Activated CD4-positive, alpha-beta memory T cell treated with anti-CD3 and anti-CD28 coated beads for 36 hours (primary cell): ENCODE measurements at regions of chr3 and their contacts with region 1.

Region 1: DNA sequence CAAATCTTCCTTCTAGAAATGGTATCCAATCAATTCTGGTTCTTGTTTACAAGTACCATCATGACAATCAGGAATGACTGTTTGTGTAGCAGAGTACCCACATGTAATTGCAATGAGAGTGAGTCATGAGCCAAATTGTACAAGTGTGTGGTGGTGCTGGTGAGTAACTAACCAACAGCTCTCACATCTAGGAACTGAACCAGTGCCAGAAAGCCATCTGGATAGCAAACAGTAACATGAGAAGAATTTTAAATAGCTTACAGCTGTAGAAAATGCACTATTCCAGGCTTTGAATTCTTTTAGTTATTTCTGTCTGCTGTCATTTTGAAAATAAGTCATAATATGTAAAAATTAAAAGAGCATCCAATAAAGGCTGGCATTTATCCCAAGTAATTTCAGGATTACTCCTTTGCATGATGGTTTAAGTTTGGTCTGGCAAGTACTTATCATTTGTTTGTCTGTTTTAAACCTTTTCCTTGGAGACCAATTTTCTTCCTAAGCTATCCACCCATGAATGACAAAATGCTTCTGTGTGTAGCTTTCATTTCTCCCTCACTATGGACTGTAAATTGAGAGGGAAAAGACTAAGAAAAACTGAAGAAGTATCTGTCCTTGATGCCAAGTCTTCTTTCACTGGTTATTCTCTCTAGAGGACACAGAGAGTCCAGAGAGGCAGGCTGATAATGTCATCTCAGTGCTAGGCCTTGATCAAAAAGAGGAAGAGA is 60.0 kb downstream of the PIK3CB start:
- DNase-seq: peak; percentile 58
- H3K4me3 Mint-ChIP-seq: no peak overlapping the region
- H3K27ac Mint-ChIP-seq: no peak overlapping the region
- H3K4me1 Mint-ChIP-seq: peaks cover 32% of the 10 kb centered on the region
- H3K27me3 Mint-ChIP-seq: no peaks in the 10 kb centered on the region

Region 2: GRCh38 chr3:138747225-138747624 is 27.5 kb before region 1 on chr3:
- CTCF ChIA-PET with region 1: no interaction called
- POLR2A ChIA-PET with region 1: no interaction called
- intact Hi-C with region 1: no loop called
- DNase-seq: no peak
- H3K4me3 Mint-ChIP-seq: no peak overlapping the region
- H3K27ac Mint-ChIP-seq: no peak overlapping the region
- H3K4me1 Mint-ChIP-seq: peaks cover 2% of the 10 kb centered on the region
- H3K27me3 Mint-ChIP-seq: no peaks in the 10 kb centered on the region

Region 3: GRCh38 chr3:138761002-138761401 is 13.7 kb before region 1 on chr3:
- CTCF ChIA-PET with region 1: interaction called, 4 read pairs
- POLR2A ChIA-PET with region 1: no interaction called
- intact Hi-C with region 1: loop called (anchors 1 kb)
- DNase-seq: no peak
- H3K4me3 Mint-ChIP-seq: no peak overlapping the region
- H3K27ac Mint-ChIP-seq: peak overlapping the region; percentile 88
- H3K4me1 Mint-ChIP-seq: peaks cover 35% of the 10 kb centered on the region
- H3K27me3 Mint-ChIP-seq: no peaks in the 10 kb centered on the region

Region 4: DNA sequence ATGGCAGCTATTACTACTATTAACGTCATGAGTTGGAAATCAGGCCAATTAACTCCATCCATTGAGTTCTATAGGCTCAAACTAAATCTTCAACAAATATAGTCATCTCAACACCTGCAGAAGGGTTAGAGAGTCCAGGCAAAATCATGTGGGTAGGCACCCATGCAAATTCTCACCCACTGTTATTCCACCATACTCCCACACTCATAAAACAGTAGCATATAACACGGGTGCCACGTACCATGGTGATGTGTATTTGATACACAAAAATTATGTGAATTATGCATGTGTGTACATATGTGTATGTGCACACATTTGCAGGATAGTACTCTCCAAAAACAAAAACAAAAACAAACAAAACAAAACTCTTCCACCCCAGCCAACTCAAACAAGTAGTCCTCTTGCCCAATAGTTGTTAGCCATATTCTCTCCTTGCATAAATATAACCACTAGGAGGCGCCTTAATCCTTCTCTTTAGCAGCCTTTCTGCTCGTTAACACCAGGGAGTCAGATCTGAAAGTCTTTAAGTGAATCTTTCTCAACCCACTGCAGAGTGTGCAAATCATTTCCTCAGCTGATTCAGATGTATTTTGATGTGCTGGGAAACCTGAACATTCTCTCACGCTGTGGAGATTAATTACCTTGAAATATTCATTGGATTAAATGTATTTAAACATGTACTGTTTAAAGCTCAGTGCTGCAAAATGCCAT is 652.7 kb after region 1 on chr3:
- CTCF ChIA-PET with region 1: no interaction called
- POLR2A ChIA-PET with region 1: no interaction called
- intact Hi-C with region 1: no loop called
- DNase-seq: no peak
- H3K4me3 Mint-ChIP-seq: no peak overlapping the region
- H3K27ac Mint-ChIP-seq: no peak overlapping the region
- H3K4me1 Mint-ChIP-seq: peaks cover 2% of the 10 kb centered on the region
- H3K27me3 Mint-ChIP-seq: no peaks in the 10 kb centered on the region